ENCODE measurements at regions of chr12 and their contacts with region 1.

Region 1: GRCh38 chr12:123410041-123410412 is 26.1 kb downstream of the KMT5A start:
- DNase-seq: no peak
- H3K4me3 ChIP-seq: no peak overlapping the region
- H3K27ac ChIP-seq: peak overlapping the region in 1 of 2 donors; percentile 3
- H3K4me1 ChIP-seq: no peaks in the 10 kb centered on the region
- H3K27me3 ChIP-seq: no peaks in the 10 kb centered on the region
- CTCF ChIP-seq: no peak

Region 2: GRCh38 chr12:123388177-123388947 is 21.7 kb before region 1 on chr12:
- intact Hi-C with region 1: loop called (anchors 2 kb)
- DNase-seq: peak; percentile 33 to 90
- H3K4me3 ChIP-seq: peak overlapping the region; percentile 57 to 71
- H3K27ac ChIP-seq: peak overlapping the region; percentile 84 to 93
- H3K4me1 ChIP-seq: peaks cover 11 to 41% of the 10 kb centered on the region in 2 donors
- H3K27me3 ChIP-seq: no peaks in the 10 kb centered on the region
- CTCF ChIP-seq: peak in 1 of 3 experiments; percentile 25

Region 3: GRCh38 chr12:123621619-123622530 is 211.8 kb after region 1 on chr12:
- intact Hi-C with region 1: no loop called
- DNase-seq: no peak
- H3K4me3 ChIP-seq: no peak overlapping the region
- H3K27ac ChIP-seq: no peak overlapping the region
- H3K4me1 ChIP-seq: no peaks in the 10 kb centered on the region
- H3K27me3 ChIP-seq: no peaks in the 10 kb centered on the region
- CTCF ChIP-seq: no peak

Measured in ascending aorta (tissue), 2 donors.